Right lobe of liver (tissue), 6 donors: ENCODE measurements at regions of chr22 and their contacts with region 1.

Region 1: DNA sequence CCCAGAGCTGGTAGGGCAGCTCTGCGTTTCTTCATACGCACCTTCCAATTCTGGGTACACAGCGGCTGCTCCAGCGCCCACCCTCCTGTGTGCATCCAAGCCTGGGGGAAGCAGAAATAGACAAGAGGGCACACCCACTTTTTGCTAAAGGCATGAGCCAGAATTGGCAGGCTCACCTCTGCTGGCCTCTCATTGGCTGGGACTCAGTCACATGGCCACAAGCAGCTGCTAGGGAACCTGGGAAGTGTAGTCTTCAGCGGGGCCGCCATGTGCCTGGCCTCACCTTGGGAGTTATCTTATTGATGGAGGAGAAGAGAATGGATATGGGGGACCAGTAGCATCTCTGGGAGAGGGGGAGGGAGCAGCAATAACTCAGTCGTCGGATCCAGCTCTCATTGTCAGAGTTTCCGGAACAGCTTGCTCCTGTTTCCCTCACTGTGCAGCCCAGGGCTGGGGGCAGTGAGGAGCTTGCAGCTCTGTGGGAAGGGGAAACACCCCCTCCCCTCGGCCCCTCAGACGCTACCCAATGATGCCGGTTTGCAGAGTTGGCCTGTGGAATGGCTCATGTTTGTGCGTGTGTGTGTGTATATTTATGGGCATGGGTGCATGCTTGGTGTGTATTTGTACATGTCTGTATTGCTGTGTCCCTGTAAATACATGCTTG is 11.8 kb upstream of the MIEF1 start:
- DNase-seq: peak; percentile 80 to 86 (median 86)
- ATAC-seq: peak; percentile 88 to 96 (median 90)
- H3K4me3 ChIP-seq: no peak overlapping the region
- H3K27ac ChIP-seq: no peak overlapping the region
- H3K4me1 ChIP-seq: no peaks in the 10 kb centered on the region
- H3K27me3 ChIP-seq: no peaks in the 10 kb centered on the region
- CTCF ChIP-seq: no peak
- POLR2A ChIP-seq: no peak

Region 2: DNA sequence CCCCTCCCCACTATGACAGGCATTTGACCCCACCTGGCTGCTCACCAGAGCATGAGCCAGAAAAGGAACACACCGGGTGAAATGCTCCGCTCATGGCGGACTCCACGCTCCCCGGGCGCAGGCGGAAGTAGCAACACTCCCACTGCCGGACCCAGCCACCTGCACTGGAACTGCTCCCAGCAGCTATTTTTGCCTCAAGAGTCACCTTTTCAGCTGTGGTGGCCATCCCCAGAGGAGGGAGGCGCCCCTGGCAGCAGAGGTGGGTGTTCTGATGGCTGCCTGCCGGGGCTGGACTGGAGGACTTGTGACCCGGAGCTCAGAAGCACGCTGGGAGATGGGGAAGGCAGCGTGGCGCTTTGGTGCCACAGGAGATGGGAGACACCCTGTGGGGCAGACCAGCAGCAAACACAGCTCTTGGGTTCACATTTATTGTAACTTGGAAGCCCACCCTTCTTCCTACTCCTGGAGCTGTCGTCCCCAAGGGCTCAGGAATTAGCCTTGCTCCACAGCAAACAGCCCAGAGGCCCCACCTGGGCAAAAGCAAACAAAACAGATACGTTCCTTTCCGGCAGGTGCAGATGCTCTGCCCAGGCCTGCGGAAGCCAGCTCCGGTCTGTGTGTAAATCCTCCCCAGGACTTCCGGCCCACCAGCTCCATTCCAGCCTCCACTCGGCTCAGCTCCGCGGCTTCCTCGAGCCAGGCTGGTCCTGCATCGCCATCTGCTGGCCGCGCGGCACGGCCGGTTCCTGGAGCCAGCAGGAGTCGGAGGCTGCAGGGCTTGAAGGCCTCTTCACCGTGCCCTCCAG is 38.6 kb after region 1 on chr22:
- intact Hi-C with region 1: loop called in 1 of 2 experiments (anchors 5 kb)
- DNase-seq: peak; percentile 88 to 92 (median 90)
- ATAC-seq: peak; percentile 60 to 69 (median 66)
- H3K4me3 ChIP-seq: no peak overlapping the region
- H3K27ac ChIP-seq: no peak overlapping the region
- H3K4me1 ChIP-seq: peaks cover 0 to 55% (median 21%) of the 10 kb centered on the region in 4 donors
- H3K27me3 ChIP-seq: no peaks in the 10 kb centered on the region
- CTCF ChIP-seq: peak; percentile 95 to 99 (median 96)
- POLR2A ChIP-seq: no peak